PC-9 (cell line): ENCODE measurements at regions of chr11 and their contacts with region 1.

Region 1: DNA sequence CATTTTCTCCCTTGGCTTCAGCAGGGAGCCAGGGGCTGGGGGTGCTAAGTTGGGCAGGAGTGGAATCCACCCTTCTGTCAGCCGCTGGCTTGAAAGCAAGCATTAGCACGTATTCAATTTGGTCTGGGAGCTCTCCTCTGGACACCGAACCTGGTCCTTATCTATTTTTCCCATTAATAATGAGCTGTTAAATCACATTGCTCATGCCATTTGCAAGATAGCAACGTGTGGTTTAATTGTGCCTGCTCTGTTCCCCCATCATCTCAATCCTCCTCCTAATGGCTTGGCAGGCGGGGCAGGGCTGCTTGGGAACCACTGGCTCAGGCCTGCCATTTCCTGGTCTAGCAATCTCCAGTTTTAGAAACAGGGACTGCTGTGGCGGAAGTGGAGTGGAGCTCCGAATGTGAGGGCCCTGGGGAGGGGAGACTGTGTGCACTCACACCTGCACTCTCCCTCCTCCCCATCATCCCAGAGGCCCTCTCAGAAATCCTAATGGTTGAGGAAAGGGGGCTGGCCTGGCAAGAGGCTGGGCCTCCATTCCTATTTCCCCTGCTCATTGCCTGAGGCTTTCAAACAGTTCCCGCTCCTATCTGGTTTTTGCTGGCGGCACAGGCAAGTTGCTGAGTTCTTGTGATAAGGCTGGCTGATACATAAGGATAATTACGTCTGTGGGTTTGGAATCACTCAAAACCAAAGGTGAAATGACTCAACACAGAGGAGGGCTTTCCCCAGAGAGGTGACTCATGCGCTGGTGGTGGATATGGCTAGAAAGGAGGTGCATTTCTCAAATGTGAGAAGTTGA is 201.2 kb upstream of the E2F8 start:
- DNase-seq: peak; percentile 91 to 100
- H3K4me3 ChIP-seq: peak overlapping the region; percentile 5; the same call in 1 of the 2 replicates
- H3K27ac ChIP-seq: peak overlapping the region; percentile 89
- H3K4me1 ChIP-seq: peaks cover 92% of the 10 kb centered on the region
- H3K27me3 ChIP-seq: no peaks in the 10 kb centered on the region
- CTCF ChIP-seq: no peak

Region 2: DNA sequence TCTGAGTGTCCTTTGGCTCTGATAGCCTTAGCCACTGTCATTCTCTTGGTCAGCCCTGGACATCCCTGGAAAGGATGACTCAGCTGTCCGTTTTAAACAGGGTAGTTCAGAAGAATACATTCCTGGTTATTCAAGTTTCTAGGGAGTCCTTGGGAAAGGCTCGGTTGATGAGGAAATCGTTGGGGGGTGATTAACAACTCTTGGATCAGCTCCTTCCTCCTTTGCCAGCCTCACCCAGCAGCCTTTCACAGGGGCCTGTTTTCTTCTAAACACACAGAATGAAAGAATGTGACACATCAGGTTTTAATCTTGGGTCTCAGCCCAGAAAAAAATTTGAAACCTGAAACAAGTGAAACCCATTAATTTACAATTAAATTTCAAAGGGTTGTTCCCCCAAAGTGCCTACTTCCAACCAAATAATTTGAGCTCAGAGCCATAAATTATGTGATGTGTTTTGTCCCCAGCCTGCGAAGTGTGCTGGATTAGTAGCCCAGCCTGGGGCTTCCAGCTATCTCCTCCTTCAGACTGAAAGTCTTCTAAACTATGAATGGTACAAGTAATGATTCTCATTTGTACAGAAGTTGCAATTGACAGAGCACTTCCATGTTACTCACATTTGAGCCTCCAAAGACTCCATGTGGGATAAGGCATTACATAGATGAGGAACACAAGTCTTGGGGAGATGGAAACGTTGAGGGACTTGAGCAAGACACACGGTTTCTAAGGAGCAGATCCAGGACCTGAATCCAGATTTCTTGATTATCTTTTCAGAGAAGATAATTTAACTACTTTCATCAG is 362.1 kb before region 1 on chr11:
- CTCF ChIA-PET with region 1: no interaction called
- POLR2A ChIA-PET with region 1: no interaction called
- intact Hi-C with region 1: loop called (anchors 1 kb)
- DNase-seq: peak; percentile 86 to 100
- H3K4me3 ChIP-seq: peak overlapping the region; percentile 41
- H3K27ac ChIP-seq: peak overlapping the region; percentile 100
- H3K4me1 ChIP-seq: peaks cover 53% of the 10 kb centered on the region
- H3K27me3 ChIP-seq: no peaks in the 10 kb centered on the region
- CTCF ChIP-seq: 0 out of 2 replicates have a peak, but pooled peaks have one; percentile 27

Region 3: DNA sequence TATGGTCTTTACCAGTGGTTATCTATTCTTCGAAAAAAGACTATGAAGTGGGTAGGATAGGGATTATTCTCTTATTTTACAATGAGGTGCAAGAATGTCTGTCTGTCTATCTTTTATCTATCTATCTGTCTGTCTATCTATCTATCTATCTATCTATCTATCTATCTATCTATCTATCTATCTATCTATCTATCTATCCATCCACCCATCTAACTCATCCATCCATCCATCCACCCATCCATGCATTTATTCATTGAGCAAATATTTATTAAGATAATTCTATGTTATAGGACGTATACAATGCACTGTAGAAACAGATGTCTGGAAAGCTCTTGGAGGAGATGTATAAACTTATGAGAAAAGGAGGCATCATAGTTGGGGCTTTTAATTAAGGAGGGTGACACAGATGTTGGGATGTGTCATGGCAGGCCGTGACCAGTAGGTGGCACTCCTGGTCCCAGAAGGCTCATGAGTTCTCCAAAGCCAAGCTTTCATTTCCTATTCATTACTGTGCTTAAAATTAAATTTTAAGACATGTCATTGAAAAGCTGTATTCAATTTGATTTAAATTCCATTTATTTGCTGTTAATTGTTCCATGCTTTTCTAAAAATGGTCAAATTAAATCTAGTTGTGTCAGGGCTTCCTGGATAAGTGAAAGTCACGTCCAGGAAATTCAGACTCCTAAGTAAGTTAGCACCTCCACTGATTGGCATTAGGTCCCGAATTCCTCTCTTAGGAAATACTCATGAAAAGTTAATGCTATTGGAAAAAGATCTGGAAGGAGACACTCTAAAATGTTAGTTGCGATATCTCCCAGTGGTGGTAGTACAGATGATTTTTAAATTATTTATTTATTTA is 182.2 kb before region 1 on chr11:
- CTCF ChIA-PET with region 1: no interaction called
- POLR2A ChIA-PET with region 1: no interaction called
- intact Hi-C with region 1: loop called (anchors 5 kb)
- DNase-seq: peak; percentile 49 to 73
- H3K4me3 ChIP-seq: no peak overlapping the region
- H3K27ac ChIP-seq: no peak overlapping the region
- H3K4me1 ChIP-seq: no peaks in the 10 kb centered on the region
- H3K27me3 ChIP-seq: no peaks in the 10 kb centered on the region
- CTCF ChIP-seq: peak; percentile 99

Region 4: GRCh38 chr11:19344751-19345518 is 97.0 kb before region 1 on chr11:
- CTCF ChIA-PET with region 1: no interaction called
- POLR2A ChIA-PET with region 1: no interaction called
- intact Hi-C with region 1: loop called (anchors 1 kb)
- DNase-seq: peak; percentile 69 to 79
- H3K4me3 ChIP-seq: no peak overlapping the region
- H3K27ac ChIP-seq: no peak overlapping the region
- H3K4me1 ChIP-seq: 0 out of 2 replicates have a peak, but pooled peaks cover 4% of the 10 kb centered on the region
- H3K27me3 ChIP-seq: peaks cover 24% of the 10 kb centered on the region
- CTCF ChIP-seq: no peak

Region 5: DNA sequence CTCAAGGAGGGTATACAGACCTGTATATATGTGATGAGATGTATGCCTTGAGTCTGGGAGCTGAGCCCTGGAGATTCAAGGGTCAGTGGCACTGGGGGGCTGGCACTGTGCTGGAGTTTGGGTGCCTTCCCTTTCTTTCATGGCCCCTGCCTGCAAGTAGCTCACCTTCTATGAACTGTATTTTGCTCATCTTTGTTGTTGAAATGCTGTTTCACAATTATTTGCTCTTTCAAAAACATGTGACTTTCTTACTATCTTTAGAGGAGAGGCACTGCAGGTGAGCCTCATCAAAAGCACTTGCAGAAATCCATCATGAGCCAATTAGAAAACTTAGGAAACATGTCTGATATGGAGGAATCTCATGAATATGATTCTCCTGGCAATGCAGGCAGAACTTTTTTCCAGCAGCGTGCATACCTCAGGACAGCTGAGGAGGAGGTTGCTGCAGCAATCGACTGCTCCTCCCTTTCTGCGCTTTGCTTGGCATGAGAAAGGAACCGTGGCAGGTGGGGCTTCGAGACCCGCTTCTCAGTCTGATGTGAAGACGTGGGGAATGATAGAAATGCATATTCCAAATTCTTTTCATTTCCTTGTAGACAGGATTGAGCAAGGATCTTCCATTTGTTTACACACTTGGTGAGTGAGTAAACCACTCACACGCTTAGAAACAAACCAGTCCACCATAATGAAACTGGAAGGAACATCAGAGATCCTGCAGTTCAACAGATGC is 22.8 kb before region 1 on chr11:
- CTCF ChIA-PET with region 1: no interaction called
- POLR2A ChIA-PET with region 1: no interaction called
- intact Hi-C with region 1: loop called (anchors 1 kb)
- DNase-seq: peak; percentile 67 to 99
- H3K4me3 ChIP-seq: peak overlapping the region; percentile 52
- H3K27ac ChIP-seq: peak overlapping the region; percentile 97
- H3K4me1 ChIP-seq: peaks cover 33% of the 10 kb centered on the region
- H3K27me3 ChIP-seq: no peaks in the 10 kb centered on the region
- CTCF ChIP-seq: no peak